K562 (cell line): ENCODE measurements at regions of chr22 and their contacts with region 1.

Region 1: GRCh38 chr22:23178512-23179254 is 1.6 kb upstream of the BCR start:
- DNase-seq: peak; percentile 69 to 100 (median 99)
- ATAC-seq: peak; percentile 57
- H3K4me3 ChIP-seq: no peak overlapping the region
- H3K27ac ChIP-seq: no peak overlapping the region
- H3K4me1 ChIP-seq: peaks cover 63 to 72% of the 10 kb centered on the region in 2 experiments
- H3K27me3 ChIP-seq: no peaks in the 10 kb centered on the region
- CTCF ChIP-seq: no peak
- EP300 ChIP-seq: no peak
- POLR2A ChIP-seq: no peak
- RAD21 ChIP-seq: no peak

Region 2: GRCh38 chr22:23219822-23220484 is 41.3 kb after region 1 on chr22:
- CTCF ChIA-PET with region 1: interaction called, 13 read pairs
- POLR2A ChIA-PET with region 1: interaction called, 3,476 read pairs
- in situ Hi-C with region 1: no loop called
- intact Hi-C with region 1: loop called (anchors 1 kb)
- DNase-seq: peak in 2 of 4 experiments; percentile 90 to 94
- ATAC-seq: peak; percentile 54
- H3K4me3 ChIP-seq: no peak overlapping the region
- H3K27ac ChIP-seq: peak overlapping the region; percentile 6; the same call in 2 of the 3 replicates
- H3K4me1 ChIP-seq: peaks cover 77 to 78% of the 10 kb centered on the region in 2 experiments
- H3K27me3 ChIP-seq: no peaks in the 10 kb centered on the region
- CTCF ChIP-seq: no peak
- EP300 ChIP-seq: no peak
- POLR2A ChIP-seq: no peak
- RAD21 ChIP-seq: no peak

Region 3: DNA sequence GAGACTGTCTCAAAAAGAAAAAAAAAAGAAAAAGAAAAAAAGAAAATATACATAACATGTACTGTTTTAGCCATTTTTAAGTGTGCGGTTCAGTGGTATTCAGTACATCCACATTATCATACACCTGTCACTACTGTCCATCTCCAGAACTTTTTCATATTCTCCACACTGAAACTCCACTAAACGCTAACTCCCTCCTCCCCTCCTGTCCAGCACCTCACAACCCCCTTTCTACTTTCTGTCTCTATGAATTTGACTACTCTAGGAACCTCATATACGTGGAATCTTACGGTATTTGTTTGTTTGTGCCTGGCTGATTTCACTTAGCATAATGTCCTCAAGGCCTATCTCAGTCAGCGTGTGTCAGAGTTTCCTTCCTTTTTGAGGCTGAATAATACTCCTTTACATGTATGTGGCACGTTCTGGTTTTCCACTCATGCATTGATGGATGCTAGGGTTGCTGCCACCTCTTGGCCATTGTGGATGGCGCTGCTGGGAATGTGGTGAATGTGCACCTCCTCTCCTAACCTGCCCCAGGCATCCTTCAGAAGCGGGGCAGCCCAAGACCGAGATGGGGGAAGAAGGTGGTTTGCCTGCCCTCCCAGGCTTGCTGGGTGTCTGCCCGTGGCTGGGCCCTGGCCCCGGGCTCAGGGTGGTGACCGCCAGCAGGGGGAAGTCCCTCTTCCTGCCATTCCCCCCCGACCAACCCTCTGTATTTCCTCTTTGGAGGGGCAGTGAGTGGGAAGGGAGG is 62.1 kb after region 1 on chr22:
- CTCF ChIA-PET with region 1: interaction called, 9 read pairs
- POLR2A ChIA-PET with region 1: interaction called, 3,476 read pairs
- in situ Hi-C with region 1: no loop called
- intact Hi-C with region 1: no loop called
- DNase-seq: peak; percentile 64 to 89 (median 66)
- ATAC-seq: peak; percentile 36
- H3K4me3 ChIP-seq: no peak overlapping the region
- H3K27ac ChIP-seq: no peak overlapping the region
- H3K4me1 ChIP-seq: peaks cover 22 to 44% of the 10 kb centered on the region in 2 experiments
- H3K27me3 ChIP-seq: no peaks in the 10 kb centered on the region
- CTCF ChIP-seq: no peak
- EP300 ChIP-seq: no peak
- POLR2A ChIP-seq: no peak
- RAD21 ChIP-seq: no peak

Region 4: GRCh38 chr22:23256986-23257888 is 78.6 kb after region 1 on chr22:
- CTCF ChIA-PET with region 1: interaction called, 28 read pairs
- POLR2A ChIA-PET with region 1: interaction called, 114 read pairs
- in situ Hi-C with region 1: no loop called
- intact Hi-C with region 1: no loop called
- DNase-seq: peak in 3 of 4 experiments; percentile 57 to 70 (median 69)
- ATAC-seq: no peak
- H3K4me3 ChIP-seq: no peak overlapping the region
- H3K27ac ChIP-seq: no peak overlapping the region
- H3K4me1 ChIP-seq: peaks cover 0 to 29% of the 10 kb centered on the region in 2 experiments; a peak in 2 of 5 replicates
- H3K27me3 ChIP-seq: no peaks in the 10 kb centered on the region
- CTCF ChIP-seq: no peak
- EP300 ChIP-seq: no peak
- POLR2A ChIP-seq: no peak
- RAD21 ChIP-seq: no peak

Region 5: DNA sequence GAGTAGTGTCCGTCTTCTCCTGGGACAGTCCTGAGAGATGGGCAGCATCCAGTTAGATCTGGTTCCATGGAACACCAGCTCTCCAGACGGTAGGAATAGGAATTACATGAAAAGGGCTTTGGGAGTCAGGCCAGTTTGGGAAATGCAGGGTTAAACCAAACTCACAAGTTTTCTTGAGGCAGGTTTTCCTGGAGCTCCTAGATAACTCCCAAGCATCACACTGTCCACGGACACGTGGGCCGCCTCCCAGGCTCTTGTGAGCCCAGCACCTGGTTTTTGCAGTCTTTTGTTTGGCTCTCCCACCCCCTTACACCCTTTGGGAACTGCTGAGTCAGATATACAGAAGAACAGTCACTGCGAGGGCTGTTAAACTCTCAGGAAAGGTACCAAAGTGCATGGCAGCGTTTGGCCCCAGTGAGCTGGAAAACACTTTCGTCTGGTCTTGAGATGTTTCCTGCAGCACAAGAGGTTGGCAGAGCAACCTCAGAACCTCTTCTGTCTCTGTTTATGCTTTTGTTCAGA is 91.6 kb after region 1 on chr22:
- CTCF ChIA-PET with region 1: interaction called, 30 read pairs
- POLR2A ChIA-PET with region 1: interaction called, 237 read pairs
- in situ Hi-C with region 1: loop called (anchors 5 kb)
- intact Hi-C with region 1: no loop called
- DNase-seq: peak in 3 of 4 experiments; percentile 61 to 82 (median 77)
- ATAC-seq: peak; percentile 31
- H3K4me3 ChIP-seq: no peak overlapping the region
- H3K27ac ChIP-seq: no peak overlapping the region
- H3K4me1 ChIP-seq: peaks cover 4 to 34% of the 10 kb centered on the region in 2 experiments; a peak in 4 of 5 replicates
- H3K27me3 ChIP-seq: no peaks in the 10 kb centered on the region
- CTCF ChIP-seq: peak in 2 of 3 experiments; percentile 75 to 87; a peak in 4 of 6 replicates
- EP300 ChIP-seq: no peak
- POLR2A ChIP-seq: no peak
- RAD21 ChIP-seq: peak in 1 of 2 experiments; percentile 82; a peak in 2 of 4 replicates

Region 6: GRCh38 chr22:23385291-23386244 is 206.9 kb after region 1 on chr22:
- CTCF ChIA-PET with region 1: no interaction called
- POLR2A ChIA-PET with region 1: no interaction called
- in situ Hi-C with region 1: no loop called
- intact Hi-C with region 1: loop called (anchors 5 kb)
- DNase-seq: peak; percentile 74 to 82 (median 80)
- ATAC-seq: peak; percentile 95
- H3K4me3 ChIP-seq: no peak overlapping the region
- H3K27ac ChIP-seq: no peak overlapping the region
- H3K4me1 ChIP-seq: peaks cover 0 to 27% of the 10 kb centered on the region in 2 experiments; a peak in 1 of 5 replicates
- H3K27me3 ChIP-seq: peaks cover 0 to 5% of the 10 kb centered on the region in 2 experiments; a peak in 1 of 5 replicates
- CTCF ChIP-seq: peak; percentile 89 to 97 (median 93)
- EP300 ChIP-seq: no peak
- POLR2A ChIP-seq: no peak
- RAD21 ChIP-seq: peak; percentile 80 to 89